HCT116 (cell line): ENCODE measurements at regions of chr15 and their contacts with region 1.

Region 1: GRCh38 chr15:89760303-89761008 is 9.4 kb upstream of the MESP1 start:
- DNase-seq: peak; percentile 39
- ATAC-seq: peak; percentile 98
- H3K4me3 ChIP-seq: no peak overlapping the region
- H3K27ac ChIP-seq: no peak overlapping the region
- H3K4me1 ChIP-seq: peaks cover 0 to 10% of the 10 kb centered on the region in 2 experiments; a peak in 1 of 4 replicates
- H3K27me3 ChIP-seq: no peaks in the 10 kb centered on the region
- CTCF ChIP-seq: peak; percentile 94 to 99 (median 97)
- POLR2A ChIP-seq: no peak
- RAD21 ChIP-seq: peak; percentile 96

Region 2: GRCh38 chr15:89776274-89777072 is 16.0 kb after region 1 on chr15 and contains the start of gene MESP2:
- CTCF ChIA-PET with region 1: interaction called, 16 read pairs
- POLR2A ChIA-PET with region 1: no interaction called
- RAD21 ChIA-PET with region 1: no interaction called
- intact Hi-C with region 1: no loop called
- DNase-seq: peak; percentile 50
- ATAC-seq: peak; percentile 91
- H3K4me3 ChIP-seq: peak within 1 kb of the TSS in 1 of 2 experiments; percentile 32; a peak in 1 of 4 replicates
- H3K27ac ChIP-seq: peak within 1 kb of the TSS; percentile 53; the same call in 1 of the 2 replicates
- H3K4me1 ChIP-seq: peaks cover 6 to 43% of the 10 kb centered on the region in 2 experiments
- H3K27me3 ChIP-seq: no peaks in the 10 kb centered on the region
- CTCF ChIP-seq: peak in 2 of 3 experiments; percentile 39 to 50; a peak in 4 of 6 replicates
- POLR2A ChIP-seq: no peak
- RAD21 ChIP-seq: peak; percentile 12; the same call in 1 of the 2 replicates
- total RNA-seq, gene MESP2: 0.20 TPM

Region 3: GRCh38 chr15:89874926-89875564 is 114.6 kb after region 1 on chr15:
- CTCF ChIA-PET with region 1: interaction called, 164 read pairs
- POLR2A ChIA-PET with region 1: interaction called, 3 read pairs
- RAD21 ChIA-PET with region 1: interaction called, 14 to 29 read pairs
- intact Hi-C with region 1: loop called (anchors 1 kb)
- DNase-seq: peak; percentile 43
- ATAC-seq: peak; percentile 100
- H3K4me3 ChIP-seq: no peak overlapping the region
- H3K27ac ChIP-seq: no peak overlapping the region
- H3K4me1 ChIP-seq: no peaks in the 10 kb centered on the region
- H3K27me3 ChIP-seq: no peaks in the 10 kb centered on the region
- CTCF ChIP-seq: peak; percentile 93 to 97 (median 96)
- POLR2A ChIP-seq: no peak
- RAD21 ChIP-seq: peak; percentile 88

Region 4: GRCh38 chr15:89888214-89888804 is 127.9 kb after region 1 on chr15:
- CTCF ChIA-PET with region 1: interaction called, 50 read pairs
- POLR2A ChIA-PET with region 1: interaction called, 4 read pairs
- RAD21 ChIA-PET with region 1: interaction called, 9 to 11 read pairs
- intact Hi-C with region 1: loop called (anchors 1 kb)
- DNase-seq: peak; percentile 48
- ATAC-seq: peak; percentile 77
- H3K4me3 ChIP-seq: no peak overlapping the region
- H3K27ac ChIP-seq: no peak overlapping the region
- H3K4me1 ChIP-seq: peaks cover 0 to 5% of the 10 kb centered on the region in 2 experiments; a peak in 1 of 4 replicates
- H3K27me3 ChIP-seq: no peaks in the 10 kb centered on the region
- CTCF ChIP-seq: peak; percentile 57 to 73 (median 61)
- POLR2A ChIP-seq: no peak
- RAD21 ChIP-seq: peak; percentile 82